Sciatic nerve (tissue), 2 donors: ENCODE measurements at regions of chr3 and their contacts with region 1.

Region 1: GRCh38 chr3:122864498-122864897 is 69.6 kb downstream of the SLC49A4 start:
- DNase-seq: no peak
- ATAC-seq: no peak

Region 2: DNA sequence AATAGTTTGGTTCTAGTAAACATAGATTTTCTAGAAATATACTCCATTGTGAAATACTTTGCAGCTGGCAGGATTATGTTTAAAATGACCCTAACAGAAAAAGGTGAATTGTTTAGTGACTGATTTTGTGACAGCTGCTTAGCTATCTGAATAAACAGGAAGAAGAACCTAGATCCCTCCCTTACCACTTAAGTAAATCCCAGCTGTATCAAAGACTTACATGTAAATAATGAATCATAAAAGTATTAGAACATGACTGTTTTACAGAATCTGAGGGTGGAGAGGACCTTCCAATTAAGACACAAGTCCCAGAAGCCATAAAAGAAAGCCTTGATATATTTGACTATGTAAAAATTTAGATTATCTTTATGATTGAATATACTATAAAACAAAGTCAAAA is 53.8 kb before region 1 on chr3:
- intact Hi-C with region 1: loop called (anchors 2 kb)
- DNase-seq: no peak
- ATAC-seq: no peak